ENCODE measurements at regions of chr17 and their contacts with region 1.

Region 1: DNA sequence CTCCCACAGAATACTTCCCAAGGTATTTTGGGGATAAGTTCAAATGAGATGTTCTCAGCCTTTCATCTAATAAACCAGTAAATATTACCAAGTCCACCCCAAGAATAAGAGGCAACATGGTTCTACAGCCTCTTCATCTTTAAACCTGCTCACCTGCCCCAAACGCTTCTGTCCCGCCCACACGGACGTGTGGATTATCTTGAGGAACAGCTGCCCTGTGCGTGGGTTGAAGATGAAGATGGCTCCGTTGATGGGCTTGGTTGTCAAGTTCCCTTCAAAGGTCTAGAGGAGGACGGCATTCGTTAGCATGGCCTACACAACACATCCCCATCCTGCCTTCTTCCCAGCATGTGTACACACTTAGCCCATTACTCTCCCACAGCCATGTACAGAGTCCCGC is 8.4 kb upstream of the RILP start:
- DNase-seq: no peak
- H3K4me3 ChIP-seq: no peak overlapping the region
- H3K27ac ChIP-seq: no peak overlapping the region
- H3K27me3 ChIP-seq: no peaks in the 10 kb centered on the region
- CTCF ChIP-seq: no peak

Region 2: DNA sequence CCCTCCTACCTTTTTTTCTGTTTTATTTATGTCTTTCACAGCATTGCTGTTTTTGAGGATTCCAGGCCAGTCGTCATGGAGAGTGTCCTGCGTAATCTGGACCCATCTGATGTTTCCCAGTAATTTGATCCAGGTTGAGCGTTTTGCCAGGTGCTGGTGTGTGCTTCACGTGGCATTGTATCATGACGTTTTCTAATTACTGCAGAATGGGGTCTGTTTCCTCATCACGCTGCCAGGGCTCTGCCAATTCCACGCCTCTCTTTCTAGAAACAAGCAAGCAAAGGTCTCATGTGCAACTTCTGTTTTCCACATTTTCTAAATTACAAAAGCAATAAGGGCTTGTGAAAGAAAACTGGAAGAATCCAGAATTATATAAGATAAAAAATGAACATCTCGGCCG is 416.2 kb before region 1 on chr17:
- intact Hi-C with region 1: no loop called
- DNase-seq: no peak
- H3K4me3 ChIP-seq: no peak overlapping the region
- H3K27ac ChIP-seq: peak overlapping the region in 2 of 59 donors; percentile 27 to 51
- H3K27me3 ChIP-seq: peaks cover 0 to 15% (median 0%) of the 10 kb centered on the region in 45 donors
- CTCF ChIP-seq: no peak

Region 3: GRCh38 chr17:1621273-1622228 is 36.5 kb before region 1 on chr17:
- intact Hi-C with region 1: loop called in 1 of 2 experiments (anchors 5 kb)
- DNase-seq: no peak
- H3K4me3 ChIP-seq: no peak overlapping the region
- H3K27ac ChIP-seq: peak overlapping the region in 1 of 59 donors; percentile 4
- H3K27me3 ChIP-seq: no peaks in the 10 kb centered on the region
- CTCF ChIP-seq: no peak

Region 4: GRCh38 chr17:2029911-2030778 is 372.0 kb after region 1 on chr17 and contains the start of gene DPH1:
- intact Hi-C with region 1: loop called in 1 of 2 experiments (anchors 10 kb)
- DNase-seq: peak; percentile 72 to 94 (median 90)
- H3K4me3 ChIP-seq: peak within 1 kb of the TSS; percentile 63 to 100 (median 95)
- H3K27ac ChIP-seq: peak within 1 kb of the TSS in 57 of 59 donors; percentile 20 to 93 (median 79)
- H3K27me3 ChIP-seq: peaks cover 0 to 21% (median 0%) of the 10 kb centered on the region in 45 donors
- CTCF ChIP-seq: peak in 23 of 56 donors; percentile 4 to 49 (median 24)
- total RNA-seq, gene DPH1: 57.6 to 158 (median 87.2) TPM

Measured in dorsolateral prefrontal cortex (tissue), 120 donors.